GM12878 (cell line): ENCODE measurements at regions of chr2 and their contacts with region 1.

Region 1: GRCh38 chr2:8159966-8160603 is 521.8 kb upstream of the ID2 start:
- DNase-seq: peak; percentile 40
- ATAC-seq: peak; percentile 90
- H3K4me3 ChIP-seq: no peak overlapping the region
- H3K27ac ChIP-seq: no peak overlapping the region
- H3K4me1 ChIP-seq: no peaks in the 10 kb centered on the region
- H3K27me3 ChIP-seq: no peaks in the 10 kb centered on the region
- CTCF ChIP-seq: no peak
- EP300 ChIP-seq: 0 out of 4 replicates have a peak, but pooled peaks of 1 of the 2 experiments have one; percentile 25
- POLR2A ChIP-seq: no peak
- RAD21 ChIP-seq: 0 out of 2 replicates have a peak, but pooled peaks have one; percentile 2

Region 2: DNA sequence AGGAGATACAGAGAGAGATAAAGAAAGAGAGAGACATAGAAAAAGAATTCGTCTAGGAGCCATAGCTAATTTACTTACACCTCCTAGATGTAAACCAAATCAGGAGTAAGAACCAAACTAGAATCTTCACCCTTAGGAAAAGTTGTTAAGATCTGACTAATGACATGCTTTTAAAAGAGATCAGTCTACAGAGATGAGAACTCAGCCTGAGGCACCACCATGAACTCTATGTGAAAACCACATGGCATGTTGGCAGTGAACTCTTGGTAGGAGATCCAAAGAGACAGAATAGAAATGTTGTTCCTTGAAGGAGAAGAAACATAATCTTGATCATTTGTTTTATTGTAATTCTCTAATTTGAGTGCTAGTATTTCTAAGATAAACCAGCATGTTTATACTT is 63.6 kb before region 1 on chr2:
- CTCF ChIA-PET with region 1: no interaction called
- POLR2A ChIA-PET with region 1: no interaction called
- RAD21 ChIA-PET with region 1: no interaction called
- SMC1A ChIA-PET with region 1: no interaction called
- in situ Hi-C with region 1: no loop called
- intact Hi-C with region 1: no loop called
- DNase-seq: no peak
- ATAC-seq: no peak
- H3K4me3 ChIP-seq: no peak overlapping the region
- H3K27ac ChIP-seq: no peak overlapping the region
- H3K4me1 ChIP-seq: no peaks in the 10 kb centered on the region
- H3K27me3 ChIP-seq: no peaks in the 10 kb centered on the region
- CTCF ChIP-seq: no peak
- EP300 ChIP-seq: no peak
- POLR2A ChIP-seq: no peak
- RAD21 ChIP-seq: no peak

Region 3: GRCh38 chr2:8121022-8121825 is 38.9 kb before region 1 on chr2:
- CTCF ChIA-PET with region 1: interaction called, 3 read pairs
- POLR2A ChIA-PET with region 1: interaction called, 10 read pairs
- RAD21 ChIA-PET with region 1: interaction called, 3 read pairs
- SMC1A ChIA-PET with region 1: interaction called, 7 read pairs
- in situ Hi-C with region 1: no loop called
- intact Hi-C with region 1: no loop called
- DNase-seq: no peak
- ATAC-seq: no peak
- H3K4me3 ChIP-seq: no peak overlapping the region
- H3K27ac ChIP-seq: no peak overlapping the region
- H3K4me1 ChIP-seq: peaks cover 11% of the 10 kb centered on the region
- H3K27me3 ChIP-seq: no peaks in the 10 kb centered on the region
- CTCF ChIP-seq: no peak
- EP300 ChIP-seq: no peak
- POLR2A ChIP-seq: no peak
- RAD21 ChIP-seq: no peak